A549 (cell line): ENCODE measurements at regions of chr12 and their contacts with region 1.

Region 1: GRCh38 chr12:66119870-66120241 is 10.7 kb downstream of the LLPH start:
- DNase-seq: no peak
- ATAC-seq: 0 out of 6 replicates have a peak, but pooled peaks of 1 of the 2 experiments have one; percentile 22
- H3K4me3 ChIP-seq: no peak overlapping the region
- H3K27ac ChIP-seq: no peak overlapping the region
- H3K4me1 ChIP-seq: no peaks in the 10 kb centered on the region
- CTCF ChIP-seq: no peak
- EP300 ChIP-seq: no peak
- POLR2A ChIP-seq: no peak
- RAD21 ChIP-seq: no peak

Region 2: DNA sequence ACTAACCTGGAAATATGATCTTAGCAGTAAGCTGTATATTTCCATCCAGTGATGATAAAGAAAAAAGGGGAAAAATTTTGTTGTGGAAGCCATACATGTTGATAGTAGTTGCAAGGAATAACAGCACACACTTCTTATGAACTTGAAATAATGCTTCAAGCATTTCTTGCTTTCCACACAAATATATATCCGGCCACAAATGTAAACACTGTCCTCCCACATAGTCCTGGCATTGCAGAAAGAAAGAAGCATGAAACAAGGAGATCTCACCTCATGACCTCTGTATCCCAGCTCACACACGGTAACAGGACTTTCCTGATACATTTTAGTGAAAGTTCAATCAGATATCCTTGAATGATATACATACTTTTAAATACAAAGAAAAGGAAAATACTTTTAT is 45.3 kb before region 1 on chr12:
- CTCF ChIA-PET with region 1: no interaction called
- POLR2A ChIA-PET with region 1: no interaction called
- DNase-seq: no peak
- ATAC-seq: no peak
- H3K4me3 ChIP-seq: no peak overlapping the region
- H3K27ac ChIP-seq: no peak overlapping the region
- H3K4me1 ChIP-seq: no peaks in the 10 kb centered on the region
- CTCF ChIP-seq: no peak
- EP300 ChIP-seq: no peak
- POLR2A ChIP-seq: no peak
- RAD21 ChIP-seq: no peak

Region 3: DNA sequence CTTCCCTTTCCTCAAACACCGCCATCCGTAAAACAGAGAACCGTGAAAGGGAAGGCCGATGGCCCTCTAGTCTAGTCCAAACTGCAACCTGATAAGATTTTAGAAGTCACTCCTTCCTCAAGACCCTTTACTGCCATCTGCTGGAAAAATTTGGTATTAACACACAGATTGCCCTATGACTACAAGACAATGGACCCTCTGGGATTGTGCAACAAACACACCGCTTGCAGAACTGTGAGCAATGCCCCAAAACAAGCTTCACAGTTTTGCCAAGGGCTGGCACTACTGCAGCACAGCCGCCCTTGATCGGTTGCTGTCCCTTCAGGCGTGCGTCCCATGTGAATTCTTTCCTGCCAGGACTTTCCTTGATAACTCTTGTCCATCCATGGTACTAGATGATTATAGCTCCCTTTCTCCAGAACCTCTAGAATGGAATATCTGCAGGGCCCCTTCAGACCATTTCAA is 12.4 kb before region 1 on chr12:
- CTCF ChIA-PET with region 1: interaction called, 43 read pairs
- POLR2A ChIA-PET with region 1: no interaction called
- DNase-seq: peak; percentile 69 to 92
- ATAC-seq: peak; percentile 91 to 97
- H3K4me3 ChIP-seq: no peak overlapping the region
- H3K27ac ChIP-seq: 0 out of 6 replicates have a peak overlapping the region, but pooled peaks of 1 of the 2 experiments have one; percentile 16
- H3K4me1 ChIP-seq: no peaks in the 10 kb centered on the region
- CTCF ChIP-seq: peak; percentile 75
- EP300 ChIP-seq: no peak
- POLR2A ChIP-seq: no peak
- RAD21 ChIP-seq: peak; percentile 77 to 82

Region 4: DNA sequence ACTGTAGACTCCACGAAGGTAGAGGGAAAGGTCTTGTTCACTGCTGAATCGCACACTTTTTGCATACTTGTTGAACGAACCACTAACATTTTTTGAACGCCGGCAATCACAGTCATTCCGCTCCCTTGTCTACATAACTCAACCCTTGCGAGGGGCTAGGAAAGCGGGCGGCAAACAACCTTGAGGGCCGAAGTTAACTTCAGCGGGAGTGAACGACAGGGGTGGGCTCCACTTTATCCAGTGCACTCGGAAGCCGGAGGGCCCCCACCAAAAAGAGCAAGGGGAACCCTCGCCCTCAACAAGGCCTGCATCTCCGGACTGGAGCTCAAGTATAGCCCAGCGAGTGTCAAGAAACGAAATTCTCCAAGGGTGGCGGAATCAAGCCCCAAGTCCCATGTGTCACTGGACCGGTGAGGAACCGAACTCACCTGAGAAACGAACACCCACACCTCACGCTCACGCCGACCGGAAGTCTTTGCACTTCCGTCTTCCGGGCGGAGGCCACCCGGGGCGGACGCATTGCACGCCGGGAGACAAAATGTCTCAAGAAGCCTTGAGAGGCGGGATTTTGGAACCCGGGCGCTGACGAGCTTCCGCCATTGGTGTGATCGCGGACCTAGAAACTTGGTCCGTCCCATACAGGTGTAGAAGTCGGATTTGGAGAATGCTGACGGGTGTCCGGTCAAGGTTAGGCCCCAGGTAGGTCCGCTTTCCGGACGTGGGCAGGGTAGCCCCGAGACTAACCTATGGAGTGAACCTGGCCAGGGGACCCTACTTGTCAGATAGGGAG is 10.6 kb after region 1 on chr12 and contains the start of gene LLPH:
- CTCF ChIA-PET with region 1: interaction called, 4 read pairs
- POLR2A ChIA-PET with region 1: interaction called, 15 read pairs
- DNase-seq: peak; percentile 92 to 94
- ATAC-seq: peak; percentile 97 to 99
- H3K4me3 ChIP-seq: peak within 1 kb of the TSS; percentile 82
- H3K27ac ChIP-seq: peak within 1 kb of the TSS; percentile 72 to 89
- H3K4me1 ChIP-seq: peaks cover 22% of the 10 kb centered on the region; the same call in 2 of the 3 replicates
- CTCF ChIP-seq: no peak
- EP300 ChIP-seq: no peak
- POLR2A ChIP-seq: peak; percentile 89
- RAD21 ChIP-seq: no peak
- polyA plus RNA-seq, gene LLPH: 31.6 and 54.5 TPM in 2 replicates